HepG2 (cell line): ENCODE measurements at regions of chr2 and their contacts with region 1.

Region 1: GRCh38 chr2:65227425-65228262 is at the start of gene ACTR2:
- DNase-seq: peak; percentile 95
- ATAC-seq: peak; percentile 97
- H3K4me3 ChIP-seq: peak within 1 kb of the TSS; percentile 76 to 99 (median 98)
- H3K27ac ChIP-seq: peak within 1 kb of the TSS; percentile 94
- H3K4me1 ChIP-seq: peaks cover 44% of the 10 kb centered on the region
- H3K27me3 ChIP-seq: peaks cover 0 to 3% of the 10 kb centered on the region in 2 experiments; a peak in 1 of 5 replicates
- CTCF ChIP-seq: peak; percentile 13; the same call in 1 of the 2 replicates
- EP300 ChIP-seq: peak in 1 of 2 experiments; percentile 29; a peak in 1 of 4 replicates
- POLR2A ChIP-seq: peak; percentile 90 to 95
- RAD21 ChIP-seq: peak; percentile 66
- total RNA-seq, gene ACTR2: 100 and 211 TPM in 2 replicates

Region 2: DNA sequence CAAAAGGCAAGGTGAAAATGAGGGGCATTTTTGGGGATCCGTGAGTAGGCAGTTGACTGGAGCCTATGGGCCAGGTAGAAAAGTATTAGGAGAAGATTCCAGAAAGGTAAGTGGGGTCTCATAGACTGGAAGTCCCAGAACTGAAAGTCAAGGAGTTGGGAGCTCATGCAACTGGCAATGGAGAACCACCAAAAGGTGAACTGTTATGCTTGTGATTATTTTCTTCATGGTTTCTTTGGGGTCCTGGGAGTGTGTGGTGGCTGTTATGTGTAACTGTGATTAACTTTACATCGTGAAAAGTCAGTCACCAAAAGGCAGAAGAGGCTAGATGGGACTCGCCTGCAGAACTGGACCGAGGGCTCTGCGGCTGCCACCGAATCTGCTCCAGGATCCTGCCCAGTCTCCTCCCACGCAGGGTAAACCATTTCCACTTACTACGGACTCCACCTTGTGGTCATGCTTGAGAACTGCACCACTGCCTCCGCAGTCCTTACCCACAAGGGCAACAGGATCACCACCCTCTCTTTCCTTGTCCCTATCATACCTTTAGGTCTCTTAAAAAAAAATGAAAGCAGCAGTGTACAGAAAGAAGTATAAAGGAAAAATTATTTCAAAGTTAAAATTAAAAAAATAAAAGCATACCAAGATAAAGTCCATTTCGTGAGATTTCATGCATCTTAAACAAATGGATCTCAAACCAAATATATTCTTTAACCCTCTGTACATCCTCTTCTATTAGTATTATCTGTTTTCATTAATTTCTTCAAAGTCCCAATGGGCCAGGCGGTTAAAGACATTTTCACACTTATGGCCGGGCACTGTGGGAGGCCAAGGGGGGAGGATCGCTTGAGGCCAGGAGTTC is 187.0 kb before region 1 on chr2:
- CTCF ChIA-PET with region 1: no interaction called
- POLR2A ChIA-PET with region 1: no interaction called
- in situ Hi-C with region 1: no loop called
- intact Hi-C with region 1: no loop called
- DNase-seq: peak; percentile 83
- ATAC-seq: peak; percentile 98
- H3K4me3 ChIP-seq: no peak overlapping the region
- H3K27ac ChIP-seq: no peak overlapping the region
- H3K4me1 ChIP-seq: peaks cover 13% of the 10 kb centered on the region
- H3K27me3 ChIP-seq: no peaks in the 10 kb centered on the region
- CTCF ChIP-seq: peak; percentile 97
- EP300 ChIP-seq: no peak
- POLR2A ChIP-seq: no peak
- RAD21 ChIP-seq: peak; percentile 92

Region 3: DNA sequence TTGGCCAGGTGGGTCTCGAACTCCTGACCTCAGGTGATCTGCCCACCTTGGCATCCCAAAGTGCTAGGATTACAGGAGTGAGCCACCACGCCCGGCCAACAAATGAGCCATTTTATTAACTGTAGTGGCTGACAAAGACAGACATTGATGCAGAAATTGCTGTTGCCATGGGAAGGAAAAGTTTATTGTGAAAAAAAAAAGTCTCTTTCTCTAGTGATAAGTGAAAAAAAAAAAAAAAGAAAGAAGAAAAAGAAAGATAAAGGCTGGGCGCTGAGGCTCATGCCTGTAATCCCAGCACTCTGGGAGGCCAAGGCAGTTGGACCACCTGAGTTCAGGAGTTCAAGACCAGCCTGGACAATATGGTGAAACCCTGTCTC is 57.9 kb before region 1 on chr2:
- CTCF ChIA-PET with region 1: no interaction called
- POLR2A ChIA-PET with region 1: interaction called, 4 read pairs
- in situ Hi-C with region 1: no loop called
- intact Hi-C with region 1: loop called (anchors 5 kb)
- DNase-seq: no peak
- ATAC-seq: no peak
- H3K4me3 ChIP-seq: no peak overlapping the region
- H3K27ac ChIP-seq: no peak overlapping the region
- H3K4me1 ChIP-seq: peaks cover 54% of the 10 kb centered on the region
- H3K27me3 ChIP-seq: peaks cover 2 to 4% of the 10 kb centered on the region in 2 experiments; a peak in 2 of 5 replicates
- CTCF ChIP-seq: no peak
- EP300 ChIP-seq: no peak
- POLR2A ChIP-seq: no peak
- RAD21 ChIP-seq: no peak

Region 4: GRCh38 chr2:65215946-65216345 is 11.7 kb before region 1 on chr2:
- CTCF ChIA-PET with region 1: no interaction called
- POLR2A ChIA-PET with region 1: interaction called, 19 read pairs
- in situ Hi-C with region 1: no loop called
- intact Hi-C with region 1: no loop called
- DNase-seq: no peak
- ATAC-seq: no peak
- H3K4me3 ChIP-seq: no peak overlapping the region
- H3K27ac ChIP-seq: no peak overlapping the region
- H3K4me1 ChIP-seq: no peaks in the 10 kb centered on the region
- H3K27me3 ChIP-seq: no peaks in the 10 kb centered on the region; a peak in 1 of 5 replicates
- CTCF ChIP-seq: no peak
- EP300 ChIP-seq: no peak
- POLR2A ChIP-seq: no peak
- RAD21 ChIP-seq: no peak